ENCODE measurements at regions of chr3 and their contacts with region 1.

Region 1: GRCh38 chr3:152524198-152525140 is 255.7 kb downstream of the MBNL1 start:
- DNase-seq: peak in 5 of 9 experiments; percentile 4 to 65 (median 37)
- ATAC-seq: peak; percentile 57
- H3K4me3 ChIP-seq: no peak overlapping the region
- H3K4me3 Mint-ChIP-seq: no peak overlapping the region
- H3K27ac ChIP-seq: no peak overlapping the region
- H3K27ac Mint-ChIP-seq: no peak overlapping the region
- H3K4me1 ChIP-seq: no peaks in the 10 kb centered on the region
- H3K4me1 Mint-ChIP-seq: no peaks in the 10 kb centered on the region
- H3K27me3 ChIP-seq: no peaks in the 10 kb centered on the region
- H3K27me3 Mint-ChIP-seq: no peaks in the 10 kb centered on the region
- CTCF ChIP-seq: peak; percentile 94

Region 2: GRCh38 chr3:151439652-151440129 is 1084.8 kb before region 1 on chr3:
- CTCF ChIA-PET with region 1: no interaction called
- POLR2A ChIA-PET with region 1: no interaction called
- intact Hi-C with region 1: loop called in 1 of 2 experiments (anchors 2 kb)
- DNase-seq: peak in 2 of 9 experiments; percentile 43 to 52
- ATAC-seq: no peak
- H3K4me3 ChIP-seq: no peak overlapping the region
- H3K4me3 Mint-ChIP-seq: no peak overlapping the region
- H3K27ac ChIP-seq: no peak overlapping the region
- H3K27ac Mint-ChIP-seq: no peak overlapping the region
- H3K4me1 ChIP-seq: no peaks in the 10 kb centered on the region
- H3K4me1 Mint-ChIP-seq: no peaks in the 10 kb centered on the region
- H3K27me3 ChIP-seq: peaks cover 0 to 4% of the 10 kb centered on the region in 2 experiments
- H3K27me3 Mint-ChIP-seq: peaks cover 5% of the 10 kb centered on the region
- CTCF ChIP-seq: peak; percentile 62

Region 3: DNA sequence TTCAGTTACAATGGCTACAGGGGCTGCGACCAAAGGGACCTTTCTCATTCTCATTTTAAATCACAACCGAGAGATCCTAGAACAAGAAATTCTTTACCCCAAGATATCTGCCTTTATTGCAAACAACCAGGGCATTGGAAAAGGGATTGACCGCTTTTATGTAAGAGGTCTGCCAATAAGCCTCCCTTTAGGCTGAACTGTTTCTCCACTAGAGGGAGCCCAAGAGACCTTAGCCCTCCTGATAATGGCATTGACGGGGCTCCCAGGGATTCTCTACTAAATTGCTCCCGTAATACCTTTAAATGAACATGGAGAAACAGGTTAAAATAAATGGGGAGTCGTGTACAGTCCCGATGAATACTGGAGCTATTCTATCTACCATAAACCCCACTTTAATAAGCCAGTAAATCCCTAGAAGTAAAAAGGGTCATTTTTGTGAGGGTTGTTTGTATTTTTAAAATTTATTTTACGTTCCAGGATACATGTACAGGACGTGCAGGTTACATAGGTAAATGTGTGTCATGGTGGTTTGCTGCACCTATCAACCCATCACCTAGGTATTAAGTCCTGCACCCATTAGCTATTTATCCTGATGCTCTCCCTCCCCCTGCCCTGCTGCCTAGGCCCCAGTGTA is 1056.1 kb before region 1 on chr3:
- CTCF ChIA-PET with region 1: interaction called, 8 read pairs
- POLR2A ChIA-PET with region 1: no interaction called
- intact Hi-C with region 1: loop called (anchors 1 to 2 kb)
- DNase-seq: peak in 7 of 9 experiments; percentile 6 to 68 (median 28)
- ATAC-seq: no peak
- H3K4me3 ChIP-seq: no peak overlapping the region
- H3K4me3 Mint-ChIP-seq: no peak overlapping the region
- H3K27ac ChIP-seq: no peak overlapping the region
- H3K27ac Mint-ChIP-seq: no peak overlapping the region
- H3K4me1 ChIP-seq: no peaks in the 10 kb centered on the region
- H3K4me1 Mint-ChIP-seq: no peaks in the 10 kb centered on the region
- H3K27me3 ChIP-seq: no peaks in the 10 kb centered on the region
- H3K27me3 Mint-ChIP-seq: peaks cover 5% of the 10 kb centered on the region
- CTCF ChIP-seq: peak; percentile 75

Region 4: DNA sequence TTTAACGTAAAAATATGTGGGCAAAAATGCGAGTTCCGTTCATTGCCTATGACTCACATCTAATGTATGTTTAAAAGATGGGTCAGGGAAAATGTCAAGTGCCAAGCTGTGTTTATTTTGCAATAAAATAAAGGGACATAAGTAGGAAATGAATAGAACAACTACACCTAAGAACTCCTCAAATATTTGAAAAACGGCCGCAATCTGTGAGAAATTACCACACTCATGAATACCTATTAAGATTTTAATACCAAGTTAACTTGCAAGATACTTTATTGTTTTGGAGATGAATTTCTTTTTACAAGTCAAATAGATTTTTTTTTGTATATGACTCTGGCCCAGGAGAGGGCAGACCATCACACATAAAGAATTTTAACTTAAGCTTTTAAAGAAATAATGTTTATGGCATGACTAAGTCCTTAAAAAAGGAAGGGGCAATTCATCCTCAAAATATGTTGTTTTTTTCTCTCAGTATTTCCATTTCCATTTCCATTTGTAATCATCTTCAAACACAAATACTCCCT is 498.4 kb before region 1 on chr3:
- CTCF ChIA-PET with region 1: no interaction called
- POLR2A ChIA-PET with region 1: no interaction called
- intact Hi-C with region 1: loop called in 1 of 2 experiments (anchors 5 kb)
- DNase-seq: peak in 2 of 9 experiments; percentile 7 to 25
- ATAC-seq: no peak
- H3K4me3 ChIP-seq: no peak overlapping the region
- H3K4me3 Mint-ChIP-seq: no peak overlapping the region
- H3K27ac ChIP-seq: no peak overlapping the region
- H3K27ac Mint-ChIP-seq: no peak overlapping the region
- H3K4me1 ChIP-seq: no peaks in the 10 kb centered on the region
- H3K4me1 Mint-ChIP-seq: no peaks in the 10 kb centered on the region
- H3K27me3 ChIP-seq: no peaks in the 10 kb centered on the region
- H3K27me3 Mint-ChIP-seq: peaks cover 6% of the 10 kb centered on the region
- CTCF ChIP-seq: no peak

Region 5: DNA sequence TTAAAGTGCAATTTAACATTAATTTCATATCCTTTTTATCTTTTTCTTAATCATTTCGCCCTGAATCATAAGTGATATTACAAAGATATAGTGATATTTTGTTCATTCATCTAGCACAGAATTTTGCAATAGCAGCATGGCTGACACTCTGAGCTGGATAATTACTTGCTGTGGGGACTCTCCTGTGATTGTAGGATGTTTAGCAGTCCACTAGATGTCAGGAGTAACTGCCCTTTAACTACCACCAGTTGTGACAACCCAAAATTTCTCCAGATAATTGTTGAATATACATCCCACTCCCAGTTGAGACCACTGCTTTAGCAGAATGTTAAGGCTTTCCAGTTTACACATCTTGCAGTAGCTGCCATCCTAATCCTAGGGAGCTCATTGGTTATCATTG is 452.5 kb before region 1 on chr3:
- CTCF ChIA-PET with region 1: interaction called, 5 read pairs
- POLR2A ChIA-PET with region 1: no interaction called
- intact Hi-C with region 1: loop called (anchors 1 to 2 kb)
- DNase-seq: peak in 2 of 9 experiments; percentile 49 to 59
- ATAC-seq: peak; percentile 66
- H3K4me3 ChIP-seq: no peak overlapping the region
- H3K4me3 Mint-ChIP-seq: no peak overlapping the region
- H3K27ac ChIP-seq: no peak overlapping the region
- H3K27ac Mint-ChIP-seq: no peak overlapping the region
- H3K4me1 ChIP-seq: no peaks in the 10 kb centered on the region
- H3K4me1 Mint-ChIP-seq: no peaks in the 10 kb centered on the region
- H3K27me3 ChIP-seq: no peaks in the 10 kb centered on the region
- H3K27me3 Mint-ChIP-seq: no peaks in the 10 kb centered on the region
- CTCF ChIP-seq: peak; percentile 42

Region 6: DNA sequence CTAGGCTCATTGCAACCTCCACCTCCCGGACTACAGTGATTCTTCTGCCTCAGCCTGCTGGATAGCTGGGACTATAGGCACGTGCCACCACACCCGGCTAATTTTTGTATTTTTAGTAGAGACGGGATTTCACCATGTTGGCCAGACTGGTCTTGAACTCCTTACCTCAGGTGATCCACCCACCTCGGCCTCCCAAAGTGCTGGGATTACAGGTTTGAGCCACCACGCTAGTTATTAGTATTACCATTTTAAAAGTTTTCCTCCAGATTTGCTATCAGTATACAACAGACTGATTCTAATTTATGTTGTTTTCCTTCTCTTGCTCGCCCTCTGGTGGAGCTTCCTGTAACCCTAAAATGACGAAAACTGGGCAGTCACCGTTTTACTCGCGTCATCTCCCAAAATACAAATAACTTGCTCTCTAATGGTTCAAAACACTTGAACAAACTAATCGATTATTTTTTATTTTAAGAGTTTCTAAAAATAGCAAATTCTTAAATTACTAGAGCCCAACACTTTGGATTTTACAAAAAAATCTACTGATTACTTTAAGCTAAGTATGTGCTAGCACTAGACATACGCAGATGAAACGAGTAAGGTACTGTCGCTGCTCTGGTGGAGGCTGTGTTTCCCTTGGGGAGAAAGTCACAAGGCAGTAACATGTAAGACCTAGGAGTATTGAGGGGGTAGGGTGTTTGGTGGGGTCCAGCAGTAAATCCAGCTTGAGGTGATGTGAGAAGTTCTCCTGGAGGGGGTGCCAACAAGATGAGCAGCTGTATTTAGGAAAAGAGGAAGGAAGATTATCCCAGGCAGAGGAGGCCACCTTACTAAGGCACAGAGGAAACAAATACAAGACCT is 52.4 kb before region 1 on chr3:
- CTCF ChIA-PET with region 1: no interaction called
- POLR2A ChIA-PET with region 1: no interaction called
- intact Hi-C with region 1: loop called in 1 of 2 experiments (anchors 5 kb)
- DNase-seq: peak; percentile 48 to 85 (median 70)
- ATAC-seq: peak; percentile 90
- H3K4me3 ChIP-seq: peak overlapping the region; percentile 40
- H3K4me3 Mint-ChIP-seq: peak overlapping the region; percentile 77
- H3K27ac ChIP-seq: peak overlapping the region; percentile 11 to 59
- H3K27ac Mint-ChIP-seq: peak overlapping the region; percentile 94
- H3K4me1 ChIP-seq: peaks cover 12% of the 10 kb centered on the region
- H3K4me1 Mint-ChIP-seq: peaks cover 15% of the 10 kb centered on the region
- H3K27me3 ChIP-seq: no peaks in the 10 kb centered on the region
- H3K27me3 Mint-ChIP-seq: no peaks in the 10 kb centered on the region
- CTCF ChIP-seq: peak; percentile 84

Region 7: GRCh38 chr3:152825566-152825965 is 301.1 kb after region 1 on chr3:
- CTCF ChIA-PET with region 1: no interaction called
- POLR2A ChIA-PET with region 1: no interaction called
- intact Hi-C with region 1: no loop called
- DNase-seq: no peak
- ATAC-seq: no peak
- H3K4me3 ChIP-seq: no peak overlapping the region
- H3K4me3 Mint-ChIP-seq: no peak overlapping the region
- H3K27ac ChIP-seq: no peak overlapping the region
- H3K27ac Mint-ChIP-seq: no peak overlapping the region
- H3K4me1 ChIP-seq: no peaks in the 10 kb centered on the region
- H3K4me1 Mint-ChIP-seq: no peaks in the 10 kb centered on the region
- H3K27me3 ChIP-seq: peaks cover 0 to 2% of the 10 kb centered on the region in 2 experiments
- H3K27me3 Mint-ChIP-seq: no peaks in the 10 kb centered on the region
- CTCF ChIP-seq: no peak